PC-3 (cell line): ENCODE measurements at regions of chr9 and their contacts with region 1.

Region 1: DNA sequence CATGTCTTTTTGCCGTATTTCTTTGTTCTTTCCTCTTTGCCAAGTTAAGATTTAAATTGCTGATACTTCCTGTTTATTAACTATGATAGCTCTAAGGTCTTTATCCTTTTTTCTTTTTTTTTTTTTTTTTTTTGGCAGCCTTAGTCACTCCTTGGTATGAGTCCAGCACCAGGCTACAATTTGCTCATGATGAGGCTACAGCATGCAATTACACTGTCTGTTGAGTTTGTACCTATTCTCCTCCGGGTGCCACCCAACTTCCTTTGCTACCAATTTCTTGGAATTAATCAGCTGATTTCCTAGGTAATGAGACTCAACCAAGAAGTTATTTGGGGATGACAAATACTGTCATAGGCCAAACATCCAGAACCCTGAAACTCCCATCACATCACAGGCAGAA is 25.5 kb downstream of the ACTL7B start:
- DNase-seq: peak; percentile 36
- ATAC-seq: peak; percentile 27; the same call in 1 of the 2 replicates
- H3K4me3 ChIP-seq: no peak overlapping the region
- H3K27ac ChIP-seq: no peak overlapping the region
- H3K4me1 ChIP-seq: peaks cover 31% of the 10 kb centered on the region
- H3K27me3 ChIP-seq: no peaks in the 10 kb centered on the region
- CTCF ChIP-seq: no peak

Region 2: DNA sequence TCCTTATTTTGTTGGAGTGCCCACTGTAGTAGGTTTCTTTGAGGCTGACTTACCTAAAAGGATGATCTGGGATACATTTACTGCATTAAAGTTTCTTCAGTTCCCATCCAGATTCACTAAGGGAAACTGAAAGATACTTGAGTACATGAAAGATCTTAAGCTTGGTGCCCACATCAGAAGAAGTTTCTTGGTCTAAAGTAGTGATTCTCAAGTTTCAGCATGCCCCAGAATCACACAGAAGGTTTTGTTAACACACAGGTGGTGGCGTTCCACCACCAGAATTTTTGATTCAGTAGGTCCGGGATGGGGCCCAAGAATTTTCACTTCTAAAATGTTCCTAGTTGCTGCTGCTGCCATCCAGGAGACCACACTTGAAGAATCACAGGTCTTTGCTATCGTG is 1796.3 kb before region 1 on chr9:
- CTCF ChIA-PET with region 1: no interaction called
- POLR2A ChIA-PET with region 1: interaction called, 15 read pairs
- intact Hi-C with region 1: no loop called
- DNase-seq: no peak
- ATAC-seq: no peak
- H3K4me3 ChIP-seq: no peak overlapping the region
- H3K27ac ChIP-seq: no peak overlapping the region
- H3K4me1 ChIP-seq: no peaks in the 10 kb centered on the region
- H3K27me3 ChIP-seq: no peaks in the 10 kb centered on the region
- CTCF ChIP-seq: no peak

Region 3: GRCh38 chr9:107688728-107689127 is 1141.5 kb before region 1 on chr9:
- CTCF ChIA-PET with region 1: no interaction called
- POLR2A ChIA-PET with region 1: interaction called, 16 read pairs
- intact Hi-C with region 1: no loop called
- DNase-seq: no peak
- ATAC-seq: no peak
- H3K4me3 ChIP-seq: no peak overlapping the region
- H3K27ac ChIP-seq: no peak overlapping the region
- H3K4me1 ChIP-seq: no peaks in the 10 kb centered on the region
- H3K27me3 ChIP-seq: no peaks in the 10 kb centered on the region
- CTCF ChIP-seq: no peak

Region 4: GRCh38 chr9:108565651-108566378 is 264.5 kb before region 1 on chr9:
- CTCF ChIA-PET with region 1: no interaction called
- POLR2A ChIA-PET with region 1: no interaction called
- intact Hi-C with region 1: no loop called
- DNase-seq: peak; percentile 90
- ATAC-seq: peak; percentile 72
- H3K4me3 ChIP-seq: no peak overlapping the region
- H3K27ac ChIP-seq: peak overlapping the region; percentile 74
- H3K4me1 ChIP-seq: peaks cover 25% of the 10 kb centered on the region
- H3K27me3 ChIP-seq: no peaks in the 10 kb centered on the region
- CTCF ChIP-seq: peak; percentile 90

Region 5: GRCh38 chr9:108727580-108728111 is 102.6 kb before region 1 on chr9:
- CTCF ChIA-PET with region 1: no interaction called
- POLR2A ChIA-PET with region 1: no interaction called
- intact Hi-C with region 1: no loop called
- DNase-seq: no peak
- ATAC-seq: no peak
- H3K4me3 ChIP-seq: no peak overlapping the region
- H3K27ac ChIP-seq: no peak overlapping the region
- H3K4me1 ChIP-seq: no peaks in the 10 kb centered on the region
- H3K27me3 ChIP-seq: no peaks in the 10 kb centered on the region
- CTCF ChIP-seq: no peak